Left ventricle myocardium inferior (tissue), 1 donor: ENCODE measurements at regions of chr17 and their contacts with region 1.

Region 1: DNA sequence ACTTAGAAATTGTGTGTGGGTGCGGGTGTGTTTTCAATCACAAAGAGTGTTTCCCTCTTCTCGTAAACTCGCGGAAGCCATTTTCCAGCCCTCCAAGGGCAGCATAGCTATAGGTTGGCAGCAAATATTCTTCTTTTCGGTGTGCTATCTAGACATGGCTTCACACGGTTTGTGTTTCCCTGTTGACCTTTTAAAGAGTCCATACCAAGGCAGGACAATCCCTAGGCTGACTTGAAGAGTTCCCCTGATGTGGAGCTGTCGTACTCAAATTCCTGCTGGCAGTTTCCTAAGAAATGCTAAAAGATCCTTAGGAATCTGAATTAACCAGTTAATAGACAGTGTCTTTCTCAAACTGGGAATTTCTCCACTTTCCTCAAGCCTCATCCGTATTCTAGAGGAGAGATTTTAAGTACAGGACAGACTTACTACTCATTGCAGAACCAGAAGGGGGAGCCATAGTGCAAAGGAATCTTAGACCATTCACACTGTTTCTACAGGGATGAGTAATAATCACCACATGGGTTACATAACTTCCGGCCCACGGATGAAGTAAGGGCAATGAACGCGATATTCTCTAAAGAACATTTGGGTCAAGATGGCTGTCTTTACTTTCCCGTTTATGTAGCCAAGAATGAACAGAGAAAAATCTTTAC is 288.6 kb upstream of the ELAC2 start:
- DNase-seq: no peak
- H3K4me3 ChIP-seq: no peak overlapping the region
- H3K27ac ChIP-seq: no peak overlapping the region
- H3K4me1 ChIP-seq: no peaks in the 10 kb centered on the region
- H3K27me3 ChIP-seq: peaks cover 17% of the 10 kb centered on the region
- CTCF ChIP-seq: peak; percentile 63

Region 2: DNA sequence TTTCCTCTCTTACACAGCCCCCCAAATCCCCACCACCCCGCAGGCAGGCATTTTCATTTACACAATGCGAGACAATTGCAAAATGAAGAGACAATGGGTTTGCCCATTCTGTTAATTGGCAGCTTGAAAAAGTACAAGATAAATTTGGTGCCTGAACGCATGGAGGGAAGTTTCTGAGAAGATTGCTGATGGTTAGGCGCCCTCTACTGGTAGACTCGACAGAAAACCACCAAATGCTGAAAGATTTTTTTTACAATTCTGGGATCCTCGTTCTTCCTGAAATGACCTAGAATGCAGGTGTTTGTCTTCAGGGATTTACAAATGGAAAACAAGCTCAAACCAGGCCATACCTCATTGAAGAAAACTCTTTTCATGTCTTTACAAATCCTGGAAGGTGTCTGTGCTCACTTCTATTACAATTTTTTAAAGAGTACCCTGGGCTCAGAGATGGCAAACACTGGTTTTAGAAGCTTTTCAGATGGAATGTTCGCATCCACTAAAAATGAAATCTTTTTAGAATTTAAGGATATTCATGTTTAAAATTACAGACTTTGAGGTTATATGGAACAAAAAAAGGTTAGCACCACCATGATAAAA is 1620.2 kb after region 1 on chr17:
- intact Hi-C with region 1: loop called (anchors 10 kb)
- DNase-seq: no peak
- H3K4me3 ChIP-seq: no peak overlapping the region
- H3K27ac ChIP-seq: no peak overlapping the region
- H3K4me1 ChIP-seq: no peaks in the 10 kb centered on the region
- H3K27me3 ChIP-seq: peaks cover 15% of the 10 kb centered on the region
- CTCF ChIP-seq: peak; percentile 78